ENCODE measurements at regions of chr15 and their contacts with region 1.

Region 1: GRCh38 chr15:41695750-41696426 is 35.7 kb downstream of the MGA start:
- DNase-seq: peak in 12 of 14 experiments; percentile 7 to 78 (median 32)
- ATAC-seq: peak; percentile 96
- H3K4me3 ChIP-seq: no peak overlapping the region
- H3K4me3 Mint-ChIP-seq: peak overlapping the region; percentile 8
- H3K27ac ChIP-seq: no peak overlapping the region
- H3K27ac Mint-ChIP-seq: peak overlapping the region; percentile 54
- H3K4me1 ChIP-seq: peaks cover 7% of the 10 kb centered on the region
- H3K4me1 Mint-ChIP-seq: peaks cover 51% of the 10 kb centered on the region
- H3K27me3 ChIP-seq: no peaks in the 10 kb centered on the region
- H3K27me3 Mint-ChIP-seq: no peaks in the 10 kb centered on the region
- CTCF ChIP-seq: peak; percentile 63

Region 2: DNA sequence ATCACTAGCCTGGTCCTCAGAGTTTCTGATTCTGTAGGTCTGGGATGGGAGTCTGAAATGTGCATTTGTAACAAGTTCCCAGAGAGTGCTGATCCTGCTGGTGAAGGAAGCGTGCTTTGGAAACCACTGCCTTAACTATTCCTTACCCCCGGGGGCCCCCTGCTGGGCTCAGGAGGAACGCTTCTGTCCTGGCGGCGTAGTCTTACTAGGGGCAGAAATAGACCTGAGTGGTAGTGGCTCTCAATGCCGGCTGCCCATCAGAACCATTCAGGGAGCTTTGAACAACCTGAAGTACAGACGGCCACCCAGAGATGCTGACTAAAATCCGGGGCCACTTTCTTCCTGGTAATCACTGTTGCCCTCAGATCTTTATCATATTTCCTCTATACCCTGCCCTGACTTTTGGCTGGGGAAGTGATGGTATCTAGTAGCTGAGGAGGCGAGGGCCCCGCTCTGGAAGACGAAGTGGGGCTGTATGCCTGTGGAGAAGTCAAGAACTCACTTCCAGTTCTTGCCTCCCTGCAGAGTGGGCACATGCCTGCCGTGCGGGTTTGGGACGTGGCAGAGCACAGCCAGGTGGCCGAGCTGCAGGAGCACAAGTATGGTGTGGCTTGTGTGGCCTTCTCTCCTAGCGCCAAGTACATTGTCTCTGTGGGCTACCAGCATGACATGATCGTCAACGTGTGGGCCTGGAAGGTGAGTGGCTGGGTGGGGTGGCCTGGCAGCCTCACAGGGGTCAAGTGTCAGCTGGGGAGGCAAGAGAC is 115.7 kb after region 1 on chr15:
- CTCF ChIA-PET with region 1: interaction called, 5 read pairs
- POLR2A ChIA-PET with region 1: interaction called, 10 read pairs
- intact Hi-C with region 1: loop called (anchors 1 to 2 kb)
- DNase-seq: peak; percentile 62 to 88 (median 70)
- ATAC-seq: peak; percentile 97
- H3K4me3 ChIP-seq: no peak overlapping the region
- H3K4me3 Mint-ChIP-seq: no peak overlapping the region
- H3K27ac ChIP-seq: no peak overlapping the region
- H3K27ac Mint-ChIP-seq: peak overlapping the region; percentile 43
- H3K4me1 ChIP-seq: peaks cover 19% of the 10 kb centered on the region
- H3K4me1 Mint-ChIP-seq: peaks cover 12% of the 10 kb centered on the region
- H3K27me3 ChIP-seq: no peaks in the 10 kb centered on the region
- H3K27me3 Mint-ChIP-seq: no peaks in the 10 kb centered on the region
- CTCF ChIP-seq: peak; percentile 92